ENCODE measurements at regions of chr14 and their contacts with region 1.

Region 1: GRCh38 chr14:69129264-69129880 is 23.5 kb downstream of the DCAF5 start:
- DNase-seq: peak; percentile 82
- H3K4me3 ChIP-seq: no peak overlapping the region
- H3K27ac ChIP-seq: no peak overlapping the region
- H3K4me1 ChIP-seq: peaks cover 16% of the 10 kb centered on the region
- H3K27me3 ChIP-seq: no peaks in the 10 kb centered on the region
- CTCF ChIP-seq: peak; percentile 91 to 92
- POLR2A ChIP-seq: no peak

Region 2: DNA sequence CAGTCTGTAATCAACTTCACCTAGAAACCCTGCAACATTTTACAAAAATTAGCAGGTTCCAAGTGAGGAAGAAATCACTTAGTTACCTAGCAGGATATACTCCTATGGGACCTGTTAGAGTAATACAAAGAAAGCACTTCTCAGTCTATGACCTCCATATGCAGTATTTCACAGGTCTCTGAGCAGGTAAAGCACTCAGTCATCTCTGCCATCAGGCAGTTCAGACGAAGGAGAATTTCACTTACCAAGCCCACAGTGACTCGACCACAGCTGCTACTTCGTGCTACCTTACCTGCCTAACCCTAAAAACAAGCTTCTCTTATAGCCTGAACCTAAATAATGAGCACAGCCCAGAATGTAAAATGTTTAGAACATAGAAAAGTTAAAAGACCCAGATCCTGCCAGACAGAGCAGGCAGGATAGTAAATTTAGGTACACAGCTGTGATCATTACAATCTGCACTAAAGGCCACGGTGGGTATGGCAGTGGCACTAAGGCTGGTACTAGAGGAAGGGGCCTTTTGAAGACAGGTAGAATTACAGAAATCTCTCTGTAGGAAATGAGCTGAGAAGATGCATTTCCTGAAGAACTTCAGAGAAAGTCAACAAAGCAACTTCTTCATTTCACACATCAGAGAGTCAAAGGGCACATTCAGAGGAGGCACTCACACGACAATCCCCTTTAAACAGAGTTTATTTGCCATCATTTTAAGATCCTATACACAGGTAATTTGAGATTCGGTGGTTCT is 12.2 kb before region 1 on chr14:
- CTCF ChIA-PET with region 1: interaction called, 21 read pairs
- POLR2A ChIA-PET with region 1: no interaction called
- dilution Hi-C with region 1: no loop called
- intact Hi-C with region 1: no loop called
- DNase-seq: no peak
- H3K4me3 ChIP-seq: no peak overlapping the region
- H3K27ac ChIP-seq: no peak overlapping the region
- H3K4me1 ChIP-seq: no peaks in the 10 kb centered on the region
- H3K27me3 ChIP-seq: no peaks in the 10 kb centered on the region
- CTCF ChIP-seq: no peak
- POLR2A ChIP-seq: no peak

Region 3: DNA sequence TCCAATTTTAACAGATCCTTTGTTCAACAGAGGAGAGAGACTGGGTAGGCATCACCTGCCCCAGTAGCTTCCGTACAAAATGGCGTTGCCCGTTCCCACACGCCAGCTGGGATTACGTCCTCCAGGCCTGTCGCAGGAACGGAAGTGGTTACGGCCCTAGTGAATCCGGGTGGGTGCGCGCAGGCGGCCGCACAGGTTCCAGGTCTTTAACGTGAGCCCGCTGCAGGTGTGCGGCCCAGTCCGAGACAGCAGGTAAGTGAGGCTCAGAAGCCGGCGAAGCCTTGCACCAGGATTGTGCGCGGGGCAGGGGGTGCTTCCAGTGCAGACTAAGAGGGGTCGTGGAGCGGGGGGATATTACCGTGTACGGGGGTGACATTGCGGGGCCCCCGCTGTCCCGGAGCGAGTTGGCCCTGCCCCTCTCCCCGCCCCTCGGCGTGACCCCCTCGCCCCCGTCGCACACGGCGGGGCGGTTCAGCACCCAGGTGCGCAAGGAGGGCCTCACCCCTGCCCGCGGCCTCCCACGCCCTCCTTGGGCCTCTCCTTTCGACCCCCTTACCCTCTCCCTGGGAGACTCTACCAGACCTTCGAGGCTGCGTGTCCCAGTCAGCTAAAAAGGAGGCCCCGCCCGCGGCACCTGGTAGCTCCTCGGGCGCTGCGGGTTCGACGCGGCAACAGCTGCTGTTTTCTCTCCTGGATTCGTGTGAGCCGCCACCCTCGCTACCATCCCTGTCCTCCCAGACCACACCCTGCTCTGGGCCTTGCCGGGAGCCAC is 62.2 kb after region 1 on chr14 and contains the start of gene EXD2:
- CTCF ChIA-PET with region 1: interaction called, 23 read pairs
- POLR2A ChIA-PET with region 1: no interaction called
- dilution Hi-C with region 1: no loop called
- intact Hi-C with region 1: loop called (anchors 1 kb)
- DNase-seq: peak; percentile 65
- H3K4me3 ChIP-seq: peak within 1 kb of the TSS; percentile 70 to 79 (median 76)
- H3K27ac ChIP-seq: peak within 1 kb of the TSS; percentile 32
- H3K4me1 ChIP-seq: peaks cover 7% of the 10 kb centered on the region
- H3K27me3 ChIP-seq: no peaks in the 10 kb centered on the region
- CTCF ChIP-seq: no peak
- POLR2A ChIP-seq: no peak
- total RNA-seq, gene EXD2: 18.6 and 22.6 TPM in 2 replicates

Region 4: DNA sequence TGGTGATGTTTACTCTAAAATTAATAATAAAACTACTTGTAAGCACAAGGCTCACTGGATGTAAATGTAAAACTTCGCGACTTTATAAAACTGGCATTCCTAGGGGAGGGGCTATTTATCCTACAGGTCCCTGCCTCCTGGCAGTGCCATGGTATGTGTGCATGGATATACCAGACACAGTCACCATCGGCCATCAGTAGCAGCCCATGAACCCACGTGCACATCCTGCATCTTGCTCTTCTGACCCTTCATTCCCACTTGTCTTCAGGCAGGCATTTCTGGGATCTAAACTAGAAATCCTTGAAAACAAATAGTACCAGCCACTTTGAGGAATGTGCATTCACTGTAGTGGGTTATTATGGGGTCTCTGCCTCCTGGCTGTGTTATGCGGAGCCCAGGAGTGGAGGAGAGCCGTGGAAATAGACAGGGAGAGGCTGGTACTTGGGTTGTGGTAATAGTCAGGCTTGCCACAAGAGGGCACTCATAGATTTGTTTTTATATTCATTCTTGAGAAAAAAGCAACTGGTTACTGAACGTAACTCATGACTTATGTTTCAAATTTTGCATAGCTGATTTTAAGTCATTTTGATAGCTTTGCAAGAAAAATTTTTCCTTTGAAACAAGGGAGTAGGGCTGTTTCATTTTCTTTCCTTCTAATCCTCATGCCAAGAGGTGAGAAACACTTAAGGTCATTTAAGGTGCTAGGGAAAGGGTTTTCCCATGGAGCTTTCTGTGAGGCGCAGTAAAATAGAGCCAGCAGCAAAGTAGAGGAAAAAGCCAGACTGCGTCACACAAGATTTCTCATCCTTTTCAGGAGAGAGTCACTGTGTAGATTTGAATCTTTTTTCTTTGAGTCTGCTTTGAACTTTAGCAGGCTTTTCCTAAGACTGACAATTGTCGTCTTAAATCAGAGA is 113.2 kb after region 1 on chr14:
- CTCF ChIA-PET with region 1: interaction called, 31 read pairs
- POLR2A ChIA-PET with region 1: no interaction called
- dilution Hi-C with region 1: no loop called
- intact Hi-C with region 1: loop called (anchors 1 kb)
- DNase-seq: peak; percentile 71
- H3K4me3 ChIP-seq: no peak overlapping the region
- H3K27ac ChIP-seq: no peak overlapping the region
- H3K4me1 ChIP-seq: no peaks in the 10 kb centered on the region
- H3K27me3 ChIP-seq: no peaks in the 10 kb centered on the region
- CTCF ChIP-seq: peak; percentile 59 to 60
- POLR2A ChIP-seq: no peak

Region 5: GRCh38 chr14:69346710-69347109 is 217.3 kb after region 1 on chr14:
- CTCF ChIA-PET with region 1: interaction called, 12 read pairs
- POLR2A ChIA-PET with region 1: no interaction called
- dilution Hi-C with region 1: no loop called
- intact Hi-C with region 1: loop called (anchors 1 kb)
- DNase-seq: peak; percentile 19
- H3K4me3 ChIP-seq: no peak overlapping the region
- H3K27ac ChIP-seq: no peak overlapping the region
- H3K4me1 ChIP-seq: no peaks in the 10 kb centered on the region
- H3K27me3 ChIP-seq: peaks cover 3 to 8% of the 10 kb centered on the region in 2 experiments
- CTCF ChIP-seq: peak; percentile 70 to 84
- POLR2A ChIP-seq: no peak